ENCODE measurements at regions of chrX and their contacts with region 1.

Region 1: GRCh38 chrX:53683556-53684414 is 2.7 kb downstream of the HUWE1 start:
- DNase-seq: peak; percentile 65 to 96 (median 92)
- ATAC-seq: peak; percentile 88
- H3K4me3 ChIP-seq: peak overlapping the region; percentile 71
- H3K4me3 Mint-ChIP-seq: peak overlapping the region; percentile 88 to 97 (median 93)
- H3K27ac ChIP-seq: peak overlapping the region; percentile 95
- H3K27ac Mint-ChIP-seq: peak overlapping the region; percentile 93 to 98 (median 96)
- H3K4me1 ChIP-seq: peaks cover 5 to 12% of the 10 kb centered on the region in 2 donors
- H3K4me1 Mint-ChIP-seq: peaks cover 9 to 51% (median 35%) of the 10 kb centered on the region in 7 donors
- H3K27me3 ChIP-seq: no peaks in the 10 kb centered on the region
- H3K27me3 Mint-ChIP-seq: no peaks in the 10 kb centered on the region

Region 2: GRCh38 chrX:52995135-52996020 is 688.4 kb before region 1 on chrX:
- CTCF ChIA-PET with region 1: no interaction called
- POLR2A ChIA-PET with region 1: no interaction called
- intact Hi-C with region 1: loop called in 1 of 2 experiments (anchors 2 kb)
- DNase-seq: peak; percentile 67 to 94 (median 91)
- ATAC-seq: peak; percentile 98
- H3K4me3 ChIP-seq: peak overlapping the region; percentile 92
- H3K4me3 Mint-ChIP-seq: peak overlapping the region; percentile 84 to 98 (median 94)
- H3K27ac ChIP-seq: peak overlapping the region; percentile 84
- H3K27ac Mint-ChIP-seq: peak overlapping the region; percentile 97 to 100 (median 99)
- H3K4me1 ChIP-seq: peaks cover 7 to 12% of the 10 kb centered on the region in 2 donors
- H3K4me1 Mint-ChIP-seq: peaks cover 11 to 25% (median 19%) of the 10 kb centered on the region in 7 donors
- H3K27me3 ChIP-seq: no peaks in the 10 kb centered on the region
- H3K27me3 Mint-ChIP-seq: peaks cover 0 to under 1% (median 0%) of the 10 kb centered on the region in 5 donors

Region 3: DNA sequence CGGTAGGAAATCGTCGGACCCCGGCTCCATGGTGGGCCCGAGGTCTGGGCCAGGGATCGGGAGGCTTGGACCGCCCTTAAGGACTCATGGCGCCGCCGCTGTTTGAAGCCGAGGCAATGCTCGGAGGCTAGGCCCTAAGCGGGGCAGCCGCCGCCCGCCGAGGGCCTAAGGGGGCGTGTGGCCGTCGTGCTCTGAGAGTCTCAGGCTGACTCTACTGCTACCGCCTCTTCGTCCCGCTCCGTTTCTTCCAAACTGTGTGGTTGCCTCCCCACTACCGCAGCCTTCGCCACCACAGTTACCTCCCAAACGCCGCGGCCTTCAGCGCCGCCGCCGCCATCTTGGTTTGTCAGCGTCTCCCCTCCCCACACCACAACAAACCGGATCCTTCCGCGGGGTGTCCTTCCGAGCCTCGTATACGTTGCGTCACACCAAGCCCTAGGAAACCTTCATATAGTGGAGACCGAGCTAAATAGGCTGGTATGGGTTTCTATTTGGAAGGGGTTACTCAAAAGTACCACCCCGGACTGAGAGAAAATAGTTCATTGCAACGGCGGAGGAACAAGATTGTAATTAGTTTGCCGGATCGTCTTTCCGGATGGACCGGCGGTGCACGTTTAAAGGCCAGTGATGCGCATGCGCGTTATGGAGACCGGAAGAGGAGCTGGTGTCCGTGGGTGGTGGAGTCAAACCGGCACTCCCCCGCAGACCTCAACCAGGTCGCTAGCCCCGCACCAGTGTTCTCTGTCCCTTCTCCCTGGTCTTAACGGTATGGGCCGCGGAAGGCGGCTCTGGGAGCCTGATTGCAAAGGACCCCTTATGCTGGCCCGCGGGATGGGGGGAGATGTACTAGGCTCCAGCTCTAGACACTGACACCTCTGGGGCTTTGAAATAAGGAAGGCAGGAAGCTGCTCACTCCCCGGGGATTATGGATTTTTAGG is 458.7 kb before region 1 on chrX and contains the start of gene KDM5C:
- CTCF ChIA-PET with region 1: no interaction called
- POLR2A ChIA-PET with region 1: no interaction called
- intact Hi-C with region 1: loop called in 1 of 2 experiments (anchors 10 kb)
- DNase-seq: peak; percentile 65 to 97 (median 94)
- ATAC-seq: peak; percentile 88
- H3K4me3 ChIP-seq: peak within 1 kb of the TSS; percentile 94
- H3K4me3 Mint-ChIP-seq: peak within 1 kb of the TSS; percentile 93 to 100 (median 96)
- H3K27ac ChIP-seq: peak within 1 kb of the TSS; percentile 93
- H3K27ac Mint-ChIP-seq: peak within 1 kb of the TSS; percentile 96 to 100 (median 98)
- H3K4me1 ChIP-seq: peaks cover 25 to 27% of the 10 kb centered on the region in 2 donors
- H3K4me1 Mint-ChIP-seq: peaks cover 12 to 56% (median 40%) of the 10 kb centered on the region in 7 donors
- H3K27me3 ChIP-seq: no peaks in the 10 kb centered on the region
- H3K27me3 Mint-ChIP-seq: peaks cover 0 to 4% (median 0%) of the 10 kb centered on the region in 5 donors
- total RNA-seq, gene KDM5C: 104 to 216 (median 132) TPM

Region 4: GRCh38 chrX:53732797-53733196 is 49.0 kb after region 1 on chrX:
- CTCF ChIA-PET with region 1: no interaction called
- POLR2A ChIA-PET with region 1: interaction called, 3 read pairs
- intact Hi-C with region 1: loop called (anchors 5 kb)
- DNase-seq: no peak
- ATAC-seq: no peak
- H3K4me3 ChIP-seq: no peak overlapping the region
- H3K4me3 Mint-ChIP-seq: peak overlapping the region in 1 of 10 donors; percentile 65
- H3K27ac ChIP-seq: no peak overlapping the region
- H3K27ac Mint-ChIP-seq: peak overlapping the region in 1 of 9 donors; percentile 88
- H3K4me1 ChIP-seq: peaks cover 0 to 4% of the 10 kb centered on the region in 2 donors
- H3K4me1 Mint-ChIP-seq: peaks cover 0 to 32% (median 21%) of the 10 kb centered on the region in 7 donors
- H3K27me3 ChIP-seq: no peaks in the 10 kb centered on the region
- H3K27me3 Mint-ChIP-seq: no peaks in the 10 kb centered on the region

Region 5: DNA sequence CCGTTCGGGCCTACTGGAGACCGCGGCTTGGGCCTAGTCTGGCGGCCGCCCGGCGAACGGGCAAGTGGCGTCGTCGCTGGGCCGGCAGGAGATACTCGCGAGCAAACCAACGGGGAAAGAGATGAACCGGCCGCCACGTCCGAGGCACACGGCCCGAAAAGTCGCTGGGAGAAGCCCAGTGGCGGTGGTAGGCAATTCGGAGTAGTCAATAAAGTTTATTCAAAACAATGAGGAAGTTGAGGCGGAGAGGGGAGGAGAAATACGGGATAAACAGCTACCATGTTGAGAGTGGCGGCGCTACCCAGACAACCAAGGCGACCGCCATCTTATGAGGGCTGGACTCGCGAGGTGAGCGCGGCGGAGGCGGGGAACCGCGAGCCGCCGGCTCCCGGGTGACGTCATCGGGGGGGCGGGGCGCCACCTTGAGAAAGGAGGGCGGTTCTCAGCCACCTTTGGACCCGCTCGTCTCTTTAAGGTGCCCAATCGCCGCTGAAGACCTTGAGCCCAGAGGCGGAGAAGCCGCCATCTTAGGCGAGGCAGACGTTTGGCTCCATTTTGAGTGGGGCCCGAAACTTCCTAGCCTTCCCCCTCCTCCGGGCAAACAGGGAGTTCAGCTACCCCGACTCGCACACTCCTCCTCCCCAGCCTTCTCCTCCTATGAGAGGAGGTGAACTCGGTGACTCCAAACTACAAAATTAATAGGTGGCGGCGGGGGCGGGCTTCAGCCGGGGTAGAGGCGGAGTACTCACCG is 360.5 kb after region 1 on chrX and contains the start of gene PHF8:
- CTCF ChIA-PET with region 1: interaction called, 3 read pairs
- POLR2A ChIA-PET with region 1: interaction called, 9 read pairs
- intact Hi-C with region 1: loop called in 1 of 2 experiments (anchors 1 kb)
- DNase-seq: peak; percentile 84 to 96 (median 94)
- ATAC-seq: peak; percentile 90
- H3K4me3 ChIP-seq: peak within 1 kb of the TSS; percentile 80
- H3K4me3 Mint-ChIP-seq: peak within 1 kb of the TSS; percentile 84 to 96 (median 94)
- H3K27ac ChIP-seq: peak within 1 kb of the TSS; percentile 95
- H3K27ac Mint-ChIP-seq: peak within 1 kb of the TSS; percentile 93 to 99 (median 97)
- H3K4me1 ChIP-seq: peaks cover 9% of the 10 kb centered on the region in 2 donors
- H3K4me1 Mint-ChIP-seq: peaks cover 8 to 33% (median 17%) of the 10 kb centered on the region in 7 donors
- H3K27me3 ChIP-seq: no peaks in the 10 kb centered on the region
- H3K27me3 Mint-ChIP-seq: no peaks in the 10 kb centered on the region
- total RNA-seq, gene PHF8: 48.5 to 80.2 (median 54.5) TPM

Region 6: GRCh38 chrX:54529552-54530357 is 846.0 kb after region 1 on chrX and contains the start of gene GNL3L:
- CTCF ChIA-PET with region 1: no interaction called
- POLR2A ChIA-PET with region 1: no interaction called
- intact Hi-C with region 1: loop called (anchors 1 to 5 kb)
- DNase-seq: peak; percentile 58 to 84 (median 76)
- ATAC-seq: peak; percentile 93
- H3K4me3 ChIP-seq: peak within 1 kb of the TSS; percentile 82
- H3K4me3 Mint-ChIP-seq: peak within 1 kb of the TSS; percentile 87 to 97 (median 94)
- H3K27ac ChIP-seq: peak within 1 kb of the TSS; percentile 82
- H3K27ac Mint-ChIP-seq: peak within 1 kb of the TSS; percentile 87 to 99 (median 93)
- H3K4me1 ChIP-seq: peaks cover 17 to 30% of the 10 kb centered on the region in 2 donors
- H3K4me1 Mint-ChIP-seq: peaks cover 10 to 46% (median 32%) of the 10 kb centered on the region in 7 donors
- H3K27me3 ChIP-seq: no peaks in the 10 kb centered on the region
- H3K27me3 Mint-ChIP-seq: no peaks in the 10 kb centered on the region
- total RNA-seq, gene GNL3L: 32.8 to 55.4 (median 41.8) TPM